AG04449 (cell line): ENCODE measurements at regions of chr12 and their contacts with region 1.

Region 1: GRCh38 chr12:22334410-22335290 is at the start of gene ST8SIA1:
- DNase-seq: no peak
- H3K4me3 ChIP-seq: peak within 1 kb of the TSS; percentile 56
- CTCF ChIP-seq: no peak

Region 2: GRCh38 chr12:22069856-22070565 is 264.6 kb before region 1 on chr12:
- CTCF ChIA-PET with region 1: interaction called, 12 read pairs
- POLR2A ChIA-PET with region 1: no interaction called
- DNase-seq: no peak
- H3K4me3 ChIP-seq: no peak overlapping the region
- CTCF ChIP-seq: no peak

Region 3: DNA sequence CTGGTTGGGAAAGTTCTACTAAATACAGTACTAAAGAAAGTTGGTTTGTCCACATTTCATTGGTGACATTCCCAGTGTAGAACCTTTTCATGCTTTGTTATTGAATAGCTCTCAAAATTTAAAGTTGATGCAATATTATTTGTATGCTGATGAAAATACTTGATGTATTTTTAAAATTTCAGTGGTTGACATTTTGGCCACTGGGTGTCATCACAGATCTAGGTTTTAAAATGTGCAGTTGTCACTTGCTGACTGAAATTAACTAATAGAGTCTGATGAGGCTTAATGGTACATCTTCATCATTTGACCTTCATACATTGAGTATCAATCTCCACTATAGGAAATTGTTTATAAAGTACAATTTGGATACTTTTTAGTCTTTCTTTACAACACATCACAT is 251.5 kb before region 1 on chr12:
- CTCF ChIA-PET with region 1: interaction called, 16 read pairs
- POLR2A ChIA-PET with region 1: no interaction called
- DNase-seq: no peak
- H3K4me3 ChIP-seq: no peak overlapping the region
- CTCF ChIP-seq: no peak

Region 4: GRCh38 chr12:22088886-22089285 is 245.8 kb before region 1 on chr12:
- CTCF ChIA-PET with region 1: interaction called, 16 read pairs
- POLR2A ChIA-PET with region 1: no interaction called
- DNase-seq: no peak
- H3K4me3 ChIP-seq: no peak overlapping the region
- CTCF ChIP-seq: no peak

Region 5: DNA sequence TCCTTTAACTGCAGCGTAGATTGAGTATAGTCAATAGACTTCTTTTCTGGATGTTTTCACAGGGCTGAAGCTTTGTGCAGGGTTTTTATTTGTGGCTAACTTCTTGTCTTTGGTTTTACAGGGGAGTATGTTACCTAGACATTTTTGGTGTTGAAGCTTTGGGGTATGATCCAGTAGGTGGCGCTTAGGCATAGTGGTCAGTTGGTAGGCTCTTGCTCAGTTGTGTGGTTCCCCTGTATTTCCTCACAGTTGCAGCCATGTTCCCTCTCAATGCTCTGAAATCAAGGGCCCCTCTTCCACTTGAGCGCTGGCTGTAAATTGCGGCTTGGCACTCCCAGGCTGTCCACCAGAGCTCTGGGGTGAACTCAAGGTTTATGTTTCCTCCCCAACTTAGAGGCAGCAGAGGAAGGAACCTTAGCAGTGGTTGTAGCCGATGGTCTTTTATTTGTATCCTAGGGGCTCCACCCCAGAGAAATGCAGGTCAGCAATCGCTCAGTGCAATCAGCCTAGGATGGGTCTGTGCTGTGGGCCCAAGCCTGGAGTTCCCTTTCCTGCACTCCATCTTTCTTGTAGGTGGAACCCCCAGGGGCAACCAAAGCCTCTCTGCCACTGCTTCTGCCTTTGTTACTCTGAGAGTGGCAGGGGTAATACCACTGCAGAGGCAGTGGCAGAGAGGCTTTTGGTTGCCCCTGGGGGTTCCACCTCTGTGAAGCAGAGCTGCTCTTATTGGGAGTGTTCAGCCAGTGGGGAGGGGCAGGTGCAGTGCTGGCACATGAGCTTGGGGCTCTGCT is 233.5 kb before region 1 on chr12:
- CTCF ChIA-PET with region 1: interaction called, 45 read pairs
- POLR2A ChIA-PET with region 1: no interaction called
- DNase-seq: peak; percentile 5
- H3K4me3 ChIP-seq: no peak overlapping the region
- CTCF ChIP-seq: peak; percentile 33

Region 6: GRCh38 chr12:22190969-22191368 is 143.7 kb before region 1 on chr12:
- CTCF ChIA-PET with region 1: interaction called, 21 read pairs
- POLR2A ChIA-PET with region 1: no interaction called
- DNase-seq: no peak
- H3K4me3 ChIP-seq: no peak overlapping the region
- CTCF ChIP-seq: no peak

Region 7: DNA sequence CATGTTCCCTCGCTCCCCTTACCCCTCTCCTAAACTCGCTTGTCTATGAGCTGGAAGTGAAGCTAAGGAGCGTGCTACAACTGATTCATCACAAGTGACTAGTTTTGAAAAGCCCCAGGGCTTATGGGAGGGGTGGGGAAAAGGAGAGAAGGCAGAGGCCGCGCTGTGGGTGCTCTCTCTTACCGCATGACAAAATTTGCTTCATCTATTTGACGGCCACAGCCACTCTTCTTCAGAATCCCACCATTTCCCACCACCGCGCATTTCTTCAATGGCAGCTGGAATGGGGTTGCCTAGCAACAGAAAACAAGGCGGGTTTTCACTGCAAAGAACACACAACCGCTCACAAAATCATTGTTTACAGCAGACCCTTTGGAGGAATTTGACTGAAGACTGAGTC is 79.6 kb before region 1 on chr12:
- CTCF ChIA-PET with region 1: no interaction called
- POLR2A ChIA-PET with region 1: no interaction called
- DNase-seq: no peak
- H3K4me3 ChIP-seq: no peak overlapping the region
- CTCF ChIP-seq: no peak